ENCODE measurements at regions of chr1 and their contacts with region 1.

Region 1: GRCh38 chr1:175757381-175758015 is 14.1 kb upstream of the TNR start:
- DNase-seq: peak; percentile 56
- CTCF ChIP-seq: peak; percentile 83

Region 2: GRCh38 chr1:175154629-175155472 is 602.6 kb before region 1 on chr1:
- in situ Hi-C with region 1: loop called (anchors 25 kb)
- DNase-seq: peak; percentile 70
- CTCF ChIP-seq: peak; percentile 92

Region 3: GRCh38 chr1:176271572-176271971 is 514.1 kb after region 1 on chr1:
- in situ Hi-C with region 1: no loop called
- DNase-seq: no peak
- CTCF ChIP-seq: no peak

Measured in GM13977 (cell line).